BJ (cell line): ENCODE measurements at regions of chr17 and their contacts with region 1.

Region 1: GRCh38 chr17:49629435-49629834 is 48.5 kb downstream of the SPOP start:
- DNase-seq: no peak
- H3K4me3 ChIP-seq: no peak overlapping the region
- H3K27me3 ChIP-seq: no peaks in the 10 kb centered on the region
- CTCF ChIP-seq: no peak

Region 2: DNA sequence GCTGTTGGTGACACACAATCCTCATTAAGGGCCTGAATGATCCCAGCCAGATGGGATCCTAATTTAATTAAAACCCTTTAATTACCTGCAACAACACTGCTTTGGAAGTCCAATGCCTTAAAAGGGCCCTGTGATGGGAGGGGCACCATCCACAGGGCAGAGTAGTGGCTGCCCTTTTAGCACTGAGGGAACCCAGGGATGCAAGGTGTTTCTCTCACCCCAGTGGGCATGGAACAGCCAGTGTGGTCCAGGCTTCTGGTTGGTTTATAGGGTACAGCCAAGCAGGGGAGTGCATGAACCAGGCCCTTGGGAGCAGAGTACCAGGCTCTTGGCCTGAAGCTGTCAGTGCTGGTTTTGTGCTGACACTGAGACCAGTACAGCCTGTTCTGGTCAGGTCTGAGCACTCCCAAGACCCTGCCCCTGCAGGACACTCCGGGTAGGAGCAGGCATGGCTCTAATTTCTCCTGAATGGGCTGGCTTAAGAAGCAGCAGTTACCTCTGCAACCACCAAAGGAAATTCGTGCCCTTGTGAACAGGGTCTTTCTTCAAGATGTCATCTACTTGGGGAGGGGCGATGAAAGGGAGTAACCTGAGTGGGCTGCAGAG is 43.9 kb before region 1 on chr17:
- CTCF ChIA-PET with region 1: no interaction called
- POLR2A ChIA-PET with region 1: no interaction called
- DNase-seq: no peak
- H3K4me3 ChIP-seq: no peak overlapping the region
- H3K27me3 ChIP-seq: no peaks in the 10 kb centered on the region
- CTCF ChIP-seq: 0 out of 2 replicates have a peak, but pooled peaks have one; percentile 15

Region 3: GRCh38 chr17:49618028-49618611 is 11.3 kb before region 1 on chr17:
- CTCF ChIA-PET with region 1: interaction called, 12 read pairs
- POLR2A ChIA-PET with region 1: no interaction called
- DNase-seq: no peak
- H3K4me3 ChIP-seq: no peak overlapping the region
- H3K27me3 ChIP-seq: no peaks in the 10 kb centered on the region
- CTCF ChIP-seq: no peak

Region 4: DNA sequence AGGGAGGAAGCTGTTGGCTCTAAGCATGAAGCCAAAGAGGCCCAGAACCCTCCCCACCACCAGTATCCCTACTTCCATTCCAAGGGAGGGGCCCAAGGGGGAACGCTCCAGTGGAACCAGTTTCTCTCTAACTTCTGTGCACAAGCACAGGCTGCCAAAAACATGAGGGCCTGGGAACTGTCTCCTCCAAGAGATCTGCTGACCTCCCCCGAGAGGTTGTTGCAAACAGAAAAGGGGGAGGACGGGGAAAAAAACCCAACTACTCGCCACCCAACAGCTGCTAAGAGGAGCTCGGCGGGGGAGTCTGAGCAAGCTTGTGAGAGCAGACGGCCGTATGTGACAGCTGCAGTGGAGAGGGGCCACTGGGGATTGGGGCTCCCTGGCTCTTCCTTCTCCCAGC is 94.0 kb after region 1 on chr17:
- CTCF ChIA-PET with region 1: no interaction called
- POLR2A ChIA-PET with region 1: no interaction called
- DNase-seq: no peak
- H3K4me3 ChIP-seq: no peak overlapping the region
- H3K27me3 ChIP-seq: no peaks in the 10 kb centered on the region
- CTCF ChIP-seq: no peak